ENCODE measurements at regions of chr11 and their contacts with region 1.

Region 1: GRCh38 chr11:65516135-65516935 is 8.5 kb upstream of the SCYL1 start:
- DNase-seq: no peak
- H3K4me3 ChIP-seq: no peak overlapping the region
- H3K27ac ChIP-seq: no peak overlapping the region
- H3K4me1 ChIP-seq: no peaks in the 10 kb centered on the region
- H3K27me3 ChIP-seq: no peaks in the 10 kb centered on the region
- CTCF ChIP-seq: peak in 2 of 6 experiments; percentile 5 to 6
- POLR2A ChIP-seq: no peak

Region 2: DNA sequence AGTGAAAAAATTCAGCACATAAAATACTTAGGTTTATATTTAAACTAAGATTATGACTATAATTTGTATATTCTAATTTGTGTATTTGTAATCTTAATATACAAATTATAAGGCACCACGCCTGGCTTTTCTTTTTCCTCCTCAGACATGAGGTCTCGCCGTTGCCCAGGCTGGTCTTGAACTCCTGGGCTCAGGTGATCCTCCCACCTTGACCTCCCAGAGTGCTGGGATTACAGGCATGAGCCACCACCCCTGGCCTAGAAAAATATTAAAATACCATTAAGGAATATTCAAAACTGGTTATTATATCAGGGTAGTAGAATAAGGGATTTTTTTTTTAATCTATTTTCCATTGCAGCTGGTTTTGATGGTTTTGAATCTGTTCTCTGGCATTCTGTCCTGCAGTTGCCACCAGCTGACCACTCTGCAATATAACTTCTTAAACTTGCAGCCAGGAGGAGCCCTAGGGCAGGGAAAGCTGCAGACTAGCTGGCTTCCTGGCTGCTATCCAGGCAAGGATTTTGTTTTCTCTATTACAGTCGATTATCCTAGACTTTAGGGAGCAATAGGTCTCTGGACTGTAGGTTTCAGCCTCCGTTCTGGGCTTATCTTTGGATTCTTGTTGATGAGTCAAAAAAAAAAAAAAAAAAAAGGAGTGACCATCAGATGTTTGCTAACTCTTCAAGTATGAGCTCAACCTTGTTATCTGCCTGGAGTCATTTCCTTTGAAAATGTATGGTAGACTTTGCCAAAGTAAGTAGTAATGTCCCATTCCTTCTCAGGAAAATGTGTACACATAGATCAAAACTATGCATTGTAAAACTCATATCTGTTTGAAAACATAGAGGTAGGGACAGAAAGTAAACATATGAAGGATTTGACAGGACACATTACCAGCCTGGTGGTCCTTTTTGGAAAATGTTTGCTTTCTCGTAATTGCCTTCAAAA is 241.3 kb before region 1 on chr11:
- intact Hi-C with region 1: loop called in 1 of 2 experiments (anchors 10 kb)
- DNase-seq: peak; percentile 83 to 92 (median 88)
- H3K4me3 ChIP-seq: no peak overlapping the region
- H3K27ac ChIP-seq: peak overlapping the region in 2 of 5 donors; percentile 56 to 67
- H3K4me1 ChIP-seq: peaks cover 15 to 23% of the 10 kb centered on the region in 2 donors
- H3K27me3 ChIP-seq: no peaks in the 10 kb centered on the region
- CTCF ChIP-seq: peak; percentile 50 to 98 (median 92)
- POLR2A ChIP-seq: no peak

Region 3: DNA sequence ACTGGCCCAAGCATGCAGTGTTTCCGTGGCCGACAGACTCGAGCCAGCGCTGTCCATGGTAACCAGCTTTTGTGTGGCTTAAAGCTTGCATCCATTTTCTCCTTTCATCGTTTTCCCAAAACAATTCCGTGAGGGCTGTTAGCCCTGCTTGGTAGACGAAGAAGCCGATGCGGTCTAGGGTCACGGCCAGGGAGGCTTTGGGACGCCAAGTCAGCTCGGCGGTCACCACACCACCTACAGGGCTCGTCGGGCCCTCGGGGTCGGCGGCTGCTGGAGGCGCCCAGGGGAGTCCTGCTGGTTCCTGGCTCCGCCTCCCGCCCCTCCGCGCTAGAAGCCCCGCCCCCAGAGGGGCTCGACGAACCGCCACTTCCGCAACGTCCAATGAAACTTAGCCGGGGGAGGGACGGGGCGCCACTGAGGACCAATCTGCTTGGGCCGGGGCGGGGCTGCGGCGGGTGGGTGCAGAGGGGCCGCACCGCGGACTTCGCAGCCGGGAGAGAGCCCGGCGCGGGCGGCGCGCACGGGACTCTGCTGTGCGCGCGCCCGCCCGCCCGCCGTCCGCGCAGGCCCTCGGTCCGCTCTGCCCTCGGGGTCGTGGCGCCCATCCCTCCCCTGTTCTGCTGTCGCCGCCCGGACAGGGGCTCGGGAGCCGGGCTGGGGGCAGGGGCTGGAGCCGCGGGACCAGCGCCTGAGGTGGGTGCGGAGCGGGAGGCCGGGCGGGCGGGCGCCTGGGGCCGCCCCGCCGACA is 161.9 kb before region 1 on chr11 and contains the start of gene TIGD3:
- intact Hi-C with region 1: loop called in 1 of 2 experiments (anchors 5 kb)
- DNase-seq: peak; percentile 96 to 99 (median 98)
- H3K4me3 ChIP-seq: peak within 1 kb of the TSS in 2 of 4 donors; percentile 41 to 79
- H3K27ac ChIP-seq: peak within 1 kb of the TSS in 4 of 5 donors; percentile 15 to 79 (median 66)
- H3K4me1 ChIP-seq: peaks cover 17 to 22% of the 10 kb centered on the region in 2 donors
- H3K27me3 ChIP-seq: no peaks in the 10 kb centered on the region
- CTCF ChIP-seq: no peak
- POLR2A ChIP-seq: peak; percentile 74
- total RNA-seq, gene TIGD3: 0.11 to 0.96 (median 0.33) TPM

Region 4: DNA sequence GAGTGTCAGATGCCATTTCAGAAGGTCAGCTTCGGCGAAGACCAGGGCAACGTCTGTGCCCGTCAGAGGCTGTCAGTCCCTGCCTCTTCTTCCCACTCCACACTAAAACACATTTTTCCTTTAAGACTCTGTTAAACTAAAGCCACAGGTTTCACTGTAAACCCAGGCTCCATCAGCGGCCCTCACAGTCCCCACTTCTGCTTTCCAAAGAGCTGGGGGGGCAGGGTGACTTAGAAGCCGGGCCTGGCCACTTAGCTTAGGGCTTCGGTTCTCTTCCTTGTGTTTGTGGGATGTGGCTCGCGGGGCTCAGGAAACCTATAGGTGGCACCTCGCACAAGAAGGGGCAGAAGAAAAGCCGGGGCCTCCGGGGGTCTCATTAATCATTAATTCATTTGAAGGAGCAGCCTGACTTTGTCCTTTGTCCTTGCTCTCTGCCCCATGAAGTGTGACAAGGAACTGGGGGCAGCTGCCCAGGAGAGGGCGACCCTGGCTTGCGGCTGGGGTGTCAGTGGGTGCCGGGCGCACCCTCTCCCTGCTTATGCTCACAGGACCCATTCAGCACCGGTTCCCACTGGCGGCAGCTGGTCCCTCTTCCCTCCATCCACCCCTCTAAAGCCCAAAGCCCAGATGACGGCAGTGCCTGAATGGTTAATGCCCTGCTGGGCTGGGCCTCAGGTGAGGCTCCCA is 138.0 kb before region 1 on chr11:
- intact Hi-C with region 1: loop called (anchors 5 to 10 kb)
- DNase-seq: peak in 1 of 7 donors; percentile 31
- H3K4me3 ChIP-seq: no peak overlapping the region
- H3K27ac ChIP-seq: no peak overlapping the region
- H3K4me1 ChIP-seq: peaks cover 18 to 22% of the 10 kb centered on the region in 2 donors
- H3K27me3 ChIP-seq: no peaks in the 10 kb centered on the region
- CTCF ChIP-seq: no peak
- POLR2A ChIP-seq: no peak

Region 5: GRCh38 chr11:65391007-65391406 is 125.3 kb before region 1 on chr11:
- intact Hi-C with region 1: no loop called
- DNase-seq: peak in 5 of 7 donors; percentile 53 to 85 (median 65)
- H3K4me3 ChIP-seq: peak overlapping the region in 1 of 4 donors; percentile 7
- H3K27ac ChIP-seq: peak overlapping the region in 4 of 5 donors; percentile 61 to 91 (median 76)
- H3K4me1 ChIP-seq: peaks cover 37 to 58% of the 10 kb centered on the region in 2 donors
- H3K27me3 ChIP-seq: no peaks in the 10 kb centered on the region
- CTCF ChIP-seq: peak in 3 of 6 experiments; percentile 14 to 36 (median 25)
- POLR2A ChIP-seq: no peak

Region 6: GRCh38 chr11:65416060-65416824 is 100.1 kb before region 1 on chr11:
- intact Hi-C with region 1: loop called (anchors 2 to 5 kb)
- DNase-seq: peak; percentile 92 to 98 (median 95)
- H3K4me3 ChIP-seq: peak overlapping the region in 2 of 4 donors; percentile 40 to 82
- H3K27ac ChIP-seq: peak overlapping the region; percentile 91 to 100 (median 100)
- H3K4me1 ChIP-seq: peaks cover 44 to 58% of the 10 kb centered on the region in 2 donors
- H3K27me3 ChIP-seq: no peaks in the 10 kb centered on the region
- CTCF ChIP-seq: peak in 5 of 6 experiments; percentile 95 to 100 (median 99)
- POLR2A ChIP-seq: peak in 1 of 2 donors; percentile 24

Region 7: GRCh38 chr11:65454696-65455456 is 61.5 kb before region 1 on chr11:
- intact Hi-C with region 1: loop called (anchors 10 kb)
- DNase-seq: peak; percentile 90 to 95 (median 93)
- H3K4me3 ChIP-seq: peak overlapping the region in 2 of 4 donors; percentile 7 to 53
- H3K27ac ChIP-seq: peak overlapping the region; percentile 53 to 89 (median 75)
- H3K4me1 ChIP-seq: peaks cover 5 to 10% of the 10 kb centered on the region in 2 donors
- H3K27me3 ChIP-seq: no peaks in the 10 kb centered on the region
- CTCF ChIP-seq: no peak
- POLR2A ChIP-seq: peak; percentile 31 to 87

Region 8: DNA sequence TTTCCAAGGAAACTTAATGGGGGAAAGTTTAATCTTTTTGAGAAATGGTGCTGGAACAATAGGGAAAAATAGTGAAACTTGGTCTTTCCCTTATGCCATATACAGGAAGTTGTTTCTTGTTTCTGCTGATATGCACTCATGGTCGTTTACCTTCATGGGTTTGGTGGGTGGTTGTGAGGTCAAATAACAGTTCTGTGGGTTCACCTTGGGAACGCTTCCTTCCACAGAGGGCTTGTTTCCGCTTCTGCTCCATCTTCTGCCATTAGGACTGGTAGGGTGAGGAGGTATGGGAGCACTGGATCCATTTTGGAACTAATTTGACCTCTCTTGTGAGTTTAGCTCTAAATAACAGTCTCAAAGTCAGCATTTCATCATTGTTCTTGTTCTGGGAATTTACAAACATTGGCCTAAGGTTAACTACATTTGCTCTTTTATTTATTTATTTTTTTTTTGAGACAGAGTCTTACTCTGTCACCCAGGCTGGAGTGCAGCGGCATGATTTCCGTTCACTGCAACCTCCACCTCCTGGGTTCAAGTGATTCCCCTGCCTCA is 163.9 kb after region 1 on chr11:
- intact Hi-C with region 1: no loop called
- DNase-seq: no peak
- H3K4me3 ChIP-seq: no peak overlapping the region
- H3K27ac ChIP-seq: no peak overlapping the region
- H3K4me1 ChIP-seq: no peaks in the 10 kb centered on the region
- H3K27me3 ChIP-seq: no peaks in the 10 kb centered on the region
- CTCF ChIP-seq: no peak
- POLR2A ChIP-seq: no peak

Measured in adrenal gland (tissue), 19 donors.